Astrocyte of the cerebellum (primary cell): ENCODE measurements at regions of chr9 and their contacts with region 1.

Region 1: GRCh38 chr9:126301985-126302603 is 24.5 kb upstream of the MVB12B start:
- DNase-seq: peak; percentile 47
- H3K4me3 ChIP-seq: no peak overlapping the region
- CTCF ChIP-seq: peak; percentile 90

Region 2: DNA sequence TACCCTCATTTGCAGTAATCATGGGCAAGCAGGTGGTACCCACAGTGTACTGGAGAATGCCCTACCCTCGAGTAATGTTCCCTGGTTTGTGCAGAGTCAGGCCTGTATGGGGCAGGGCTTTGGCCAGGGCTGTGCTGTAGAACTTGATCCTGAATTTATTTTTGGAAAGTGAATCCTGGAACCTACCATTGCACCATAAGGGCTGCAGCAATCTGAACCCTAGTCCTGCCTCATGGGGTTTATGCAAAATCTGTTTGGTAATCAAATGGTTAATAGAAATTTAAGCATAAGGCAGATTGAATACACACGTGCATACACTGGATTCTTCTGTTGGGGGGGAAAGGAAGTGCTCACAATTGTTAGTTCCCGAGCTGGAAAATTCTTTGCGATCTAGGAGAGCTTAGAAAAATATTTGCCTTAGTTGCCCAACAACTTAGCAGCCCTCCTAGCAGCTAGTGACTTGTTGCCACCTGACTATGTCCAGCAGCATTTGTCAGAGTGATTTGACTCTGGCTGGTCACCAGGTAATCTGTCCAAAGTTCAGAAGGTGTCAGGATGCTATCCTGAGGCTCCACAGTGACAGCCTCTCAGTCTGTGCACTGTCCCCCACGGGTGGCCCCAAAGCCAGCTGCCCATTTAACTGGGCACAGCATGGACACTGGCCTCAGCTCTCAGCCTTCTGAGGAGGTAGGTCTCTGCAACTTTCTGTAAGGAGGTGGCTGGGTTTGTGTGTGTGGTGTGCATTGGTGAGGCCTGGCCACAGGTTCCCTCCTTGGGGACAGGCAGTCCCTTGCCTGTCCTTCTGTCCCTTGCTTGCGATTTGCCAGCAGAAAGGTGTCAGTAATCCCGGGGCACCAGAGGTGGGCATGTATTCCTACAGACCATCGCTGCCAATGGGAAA is 32.9 kb after region 1 on chr9:
- in situ Hi-C with region 1: loop called (anchors 5 kb)
- DNase-seq: no peak
- H3K4me3 ChIP-seq: no peak overlapping the region
- CTCF ChIP-seq: no peak

Region 3: DNA sequence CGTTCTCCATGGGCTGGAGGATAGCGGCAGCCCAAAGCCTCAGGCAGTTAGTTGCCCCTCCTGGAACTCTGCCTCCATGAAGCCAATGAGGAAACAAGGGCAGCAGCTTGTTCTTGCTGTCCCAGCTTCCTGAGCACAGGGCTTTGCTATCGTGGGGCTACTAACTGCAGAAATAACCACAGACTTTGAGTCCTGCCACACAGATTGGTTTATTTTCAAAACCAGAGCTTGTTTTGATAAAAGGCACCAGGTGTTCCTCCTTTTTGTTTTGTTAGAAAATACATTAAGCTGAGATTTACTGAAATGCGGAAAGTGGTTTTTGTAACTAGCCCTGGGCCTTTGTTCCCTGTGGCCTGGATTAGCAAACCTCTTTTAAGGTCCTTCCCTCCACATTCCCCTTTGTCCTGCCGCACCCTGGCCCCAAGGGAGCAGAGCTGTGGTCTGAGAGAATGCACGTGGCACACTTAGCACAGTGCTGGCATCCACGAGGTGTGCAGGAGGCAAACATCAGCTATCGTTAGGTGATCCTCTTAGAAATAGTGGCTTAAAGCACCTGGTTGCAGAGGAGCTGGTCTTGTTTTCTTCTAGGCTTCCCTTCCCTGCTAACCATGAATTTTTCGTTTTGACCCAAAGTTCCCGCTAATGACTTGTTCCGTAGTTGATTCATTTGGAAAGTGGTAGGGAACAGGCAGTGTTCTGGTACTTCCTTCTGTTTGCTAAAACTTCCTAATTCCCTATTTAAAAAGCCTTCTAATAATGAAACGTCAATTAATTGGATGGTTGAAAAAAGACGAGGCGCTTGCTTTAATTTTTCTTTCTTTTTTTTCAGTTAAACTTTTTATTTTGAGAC is 46.0 kb after region 1 on chr9:
- in situ Hi-C with region 1: no loop called
- DNase-seq: peak; percentile 26
- H3K4me3 ChIP-seq: no peak overlapping the region
- CTCF ChIP-seq: no peak